Activated CD4-positive, alpha-beta memory T cell treated with anti-CD3 and anti-CD28 coated beads for 36 hours (primary cell): ENCODE measurements at regions of chr20 and their contacts with region 1.

Region 1: DNA sequence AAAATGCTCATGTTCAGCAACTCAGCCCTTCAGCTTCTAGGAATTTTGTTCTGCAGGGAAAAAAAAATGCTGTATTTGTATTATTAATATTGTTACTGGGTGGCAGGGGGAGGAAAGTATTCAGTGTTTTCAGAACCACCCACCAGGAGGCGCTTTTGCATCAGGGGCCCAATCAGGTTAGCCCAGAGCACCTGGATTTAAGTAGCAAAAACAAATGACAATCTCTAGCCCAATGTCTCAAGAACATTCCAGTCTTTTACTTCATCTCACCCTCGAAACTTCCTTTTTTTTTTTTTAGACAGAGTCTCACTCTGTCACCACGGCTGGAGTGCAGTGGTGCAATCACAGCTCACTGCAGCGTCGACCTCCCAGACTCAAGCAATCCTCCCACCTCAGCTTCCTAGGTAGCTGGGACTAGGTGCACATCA is 635 bp upstream of the C20orf203 start:
- DNase-seq: peak; percentile 80
- H3K4me3 Mint-ChIP-seq: no peak overlapping the region
- H3K27ac Mint-ChIP-seq: no peak overlapping the region
- H3K4me1 Mint-ChIP-seq: peaks cover 9% of the 10 kb centered on the region
- H3K27me3 Mint-ChIP-seq: peaks cover 1% of the 10 kb centered on the region

Region 2: DNA sequence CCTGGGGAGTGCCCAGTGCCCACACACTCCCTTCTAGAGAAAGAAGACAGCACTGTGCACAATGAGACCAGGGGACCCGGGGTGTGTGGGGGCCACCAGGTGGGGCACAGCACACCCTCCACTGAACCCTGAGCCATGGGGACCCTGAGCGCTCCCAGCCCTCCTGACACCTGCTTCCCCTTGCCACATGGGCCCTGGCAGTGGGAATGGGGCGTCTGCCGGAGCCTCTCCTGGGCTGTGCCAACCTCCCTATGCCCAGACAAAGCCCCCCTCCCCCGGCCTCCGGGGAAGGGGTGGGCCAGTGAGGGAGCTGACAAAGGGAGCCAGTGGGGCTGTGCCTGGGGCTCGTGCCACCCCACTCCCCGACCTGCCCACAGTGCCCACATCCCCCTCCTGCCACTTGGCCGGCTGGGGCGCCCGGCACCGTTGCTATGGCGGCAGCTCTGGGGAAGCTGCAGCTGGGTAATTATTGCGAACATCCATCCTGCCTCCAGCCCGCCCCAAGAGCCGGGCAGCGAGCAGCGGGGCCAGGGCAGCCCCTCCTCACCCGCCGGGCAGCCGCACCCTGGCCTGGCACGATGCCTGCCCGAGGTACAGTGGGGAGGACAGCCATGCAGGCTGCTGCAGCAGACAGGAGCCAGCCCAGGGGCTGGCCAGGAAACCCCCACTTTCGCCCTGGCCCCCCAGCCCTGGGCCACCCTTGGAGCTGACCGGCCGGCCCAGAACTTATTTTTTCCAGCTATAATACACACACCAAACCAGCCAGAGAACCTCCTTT is 47.3 kb before region 1 on chr20:
- CTCF ChIA-PET with region 1: no interaction called
- POLR2A ChIA-PET with region 1: no interaction called
- intact Hi-C with region 1: no loop called
- DNase-seq: peak; percentile 13
- H3K4me3 Mint-ChIP-seq: no peak overlapping the region
- H3K27ac Mint-ChIP-seq: no peak overlapping the region
- H3K4me1 Mint-ChIP-seq: peaks cover 3% of the 10 kb centered on the region
- H3K27me3 Mint-ChIP-seq: peaks cover 3% of the 10 kb centered on the region

Region 3: GRCh38 chr20:32737371-32738223 is 63.2 kb after region 1 on chr20:
- CTCF ChIA-PET with region 1: interaction called, 4 read pairs
- POLR2A ChIA-PET with region 1: no interaction called
- intact Hi-C with region 1: loop called (anchors 5 kb)
- DNase-seq: peak; percentile 61
- H3K4me3 Mint-ChIP-seq: no peak overlapping the region
- H3K27ac Mint-ChIP-seq: peak overlapping the region; percentile 86
- H3K4me1 Mint-ChIP-seq: peaks cover 45% of the 10 kb centered on the region
- H3K27me3 Mint-ChIP-seq: no peaks in the 10 kb centered on the region

Region 4: DNA sequence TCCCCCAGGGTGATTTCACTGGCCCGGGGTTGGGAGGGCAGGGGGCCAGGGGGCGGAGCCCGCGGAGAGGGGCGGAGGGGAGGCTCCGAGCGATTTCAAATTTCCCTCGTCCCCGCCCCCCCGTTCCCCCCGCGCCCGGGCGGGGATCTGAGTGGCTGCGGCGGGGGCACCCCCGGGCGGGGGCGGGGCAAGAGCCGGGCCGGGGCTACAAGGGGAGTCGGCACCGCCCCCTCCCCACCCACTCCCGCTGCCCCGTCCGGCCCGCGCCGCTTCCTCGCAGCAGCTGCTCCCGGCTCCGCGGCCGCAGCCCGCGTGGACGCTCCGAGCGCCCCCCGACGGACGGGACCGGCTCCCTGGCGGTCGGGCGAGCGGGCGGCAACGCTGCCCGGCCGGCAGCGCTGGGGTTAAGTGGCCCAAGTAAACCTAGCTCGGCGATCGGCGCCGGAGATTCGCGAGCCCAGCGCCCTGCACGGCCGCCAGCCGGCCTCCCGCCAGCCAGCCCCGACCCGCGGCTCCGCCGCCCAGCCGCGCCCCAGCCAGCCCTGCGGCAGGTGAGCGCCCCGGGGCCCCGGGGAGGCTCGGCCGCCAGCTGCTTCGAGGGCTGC is 87.9 kb after region 1 on chr20 and contains the start of gene DNMT3B:
- CTCF ChIA-PET with region 1: interaction called, 21 read pairs
- POLR2A ChIA-PET with region 1: no interaction called
- intact Hi-C with region 1: no loop called
- DNase-seq: peak; percentile 81
- H3K4me3 Mint-ChIP-seq: peak within 1 kb of the TSS; percentile 79
- H3K27ac Mint-ChIP-seq: no peak within 1 kb of the TSS
- H3K4me1 Mint-ChIP-seq: peaks cover 9% of the 10 kb centered on the region
- H3K27me3 Mint-ChIP-seq: peaks cover 1% of the 10 kb centered on the region
- total RNA-seq, gene DNMT3B: 1.7 to 2.0 TPM